ENCODE measurements at regions of chr2 and their contacts with region 1.

Region 1: GRCh38 chr2:28810384-28811285 is at the start of gene SPDYA:
- DNase-seq: peak; percentile 86
- H3K4me3 ChIP-seq: peak within 1 kb of the TSS; percentile 27 to 56 (median 49)
- H3K27ac ChIP-seq: peak within 1 kb of the TSS; percentile 32 to 54 (median 52)
- H3K4me1 ChIP-seq: peaks cover 0 to 22% (median 14%) of the 10 kb centered on the region in 4 donors
- H3K27me3 ChIP-seq: no peaks in the 10 kb centered on the region
- CTCF ChIP-seq: no peak
- EP300 ChIP-seq: no peak
- POLR2A ChIP-seq: no peak
- total RNA-seq, gene SPDYA: 0.66 to 2.2 (median 1.0) TPM

Region 2: GRCh38 chr2:28566521-28567041 is 244.1 kb before region 1 on chr2:
- intact Hi-C with region 1: loop called (anchors 5 kb)
- DNase-seq: peak; percentile 91
- H3K4me3 ChIP-seq: peak overlapping the region; percentile 33 to 63 (median 60)
- H3K27ac ChIP-seq: peak overlapping the region; percentile 68 to 84 (median 71)
- H3K4me1 ChIP-seq: peaks cover 0 to 8% (median 0%) of the 10 kb centered on the region in 4 donors
- H3K27me3 ChIP-seq: no peaks in the 10 kb centered on the region
- CTCF ChIP-seq: peak; percentile 99 to 100 (median 99)
- EP300 ChIP-seq: peak in 1 of 4 donors; percentile 23
- POLR2A ChIP-seq: no peak

Region 3: GRCh38 chr2:28870146-28870891 is 59.7 kb after region 1 on chr2 and contains the start of gene TRMT61B:
- intact Hi-C with region 1: loop called (anchors 5 kb)
- DNase-seq: peak; percentile 97
- H3K4me3 ChIP-seq: peak within 1 kb of the TSS; percentile 75 to 93 (median 89)
- H3K27ac ChIP-seq: peak within 1 kb of the TSS; percentile 81 to 88 (median 84)
- H3K4me1 ChIP-seq: peaks cover 0 to 41% (median 29%) of the 10 kb centered on the region in 4 donors
- H3K27me3 ChIP-seq: no peaks in the 10 kb centered on the region
- CTCF ChIP-seq: no peak
- EP300 ChIP-seq: peak in 2 of 4 donors; percentile 12 to 64
- POLR2A ChIP-seq: peak; percentile 9 to 58
- total RNA-seq, gene TRMT61B: 8.6 to 16.8 (median 10.5) TPM

Measured in sigmoid colon (tissue), 7 donors.